GM12878 (cell line): ENCODE measurements at regions of chr2 and their contacts with region 1.

Region 1: GRCh38 chr2:207974216-207974605 is 51.1 kb downstream of the PLEKHM3 start:
- DNase-seq: no peak
- ATAC-seq: no peak
- H3K4me3 ChIP-seq: no peak overlapping the region
- H3K27ac ChIP-seq: no peak overlapping the region
- H3K4me1 ChIP-seq: 0 out of 2 replicates have a peak, but pooled peaks cover 3% of the 10 kb centered on the region
- H3K27me3 ChIP-seq: no peaks in the 10 kb centered on the region
- CTCF ChIP-seq: no peak
- EP300 ChIP-seq: no peak
- POLR2A ChIP-seq: no peak
- RAD21 ChIP-seq: no peak

Region 2: GRCh38 chr2:207754498-207755383 is 219.5 kb before region 1 on chr2:
- CTCF ChIA-PET with region 1: interaction called, 183 read pairs
- POLR2A ChIA-PET with region 1: no interaction called
- RAD21 ChIA-PET with region 1: interaction called, 115 read pairs
- SMC1A ChIA-PET with region 1: interaction called, 190 read pairs
- in situ Hi-C with region 1: loop called (anchors 10 kb)
- intact Hi-C with region 1: no loop called
- DNase-seq: no peak
- ATAC-seq: no peak
- H3K4me3 ChIP-seq: no peak overlapping the region
- H3K27ac ChIP-seq: no peak overlapping the region
- H3K4me1 ChIP-seq: no peaks in the 10 kb centered on the region
- H3K27me3 ChIP-seq: no peaks in the 10 kb centered on the region
- CTCF ChIP-seq: no peak
- EP300 ChIP-seq: no peak
- POLR2A ChIP-seq: no peak
- RAD21 ChIP-seq: no peak

Region 3: GRCh38 chr2:207960090-207960489 is 14.1 kb before region 1 on chr2:
- CTCF ChIA-PET with region 1: interaction called, 7 read pairs
- POLR2A ChIA-PET with region 1: interaction called, 4 read pairs
- RAD21 ChIA-PET with region 1: interaction called, 4 read pairs
- SMC1A ChIA-PET with region 1: interaction called, 11 read pairs
- in situ Hi-C with region 1: no loop called
- intact Hi-C with region 1: no loop called
- DNase-seq: no peak
- ATAC-seq: no peak
- H3K4me3 ChIP-seq: no peak overlapping the region
- H3K27ac ChIP-seq: no peak overlapping the region
- H3K4me1 ChIP-seq: no peaks in the 10 kb centered on the region
- H3K27me3 ChIP-seq: no peaks in the 10 kb centered on the region
- CTCF ChIP-seq: no peak
- EP300 ChIP-seq: no peak
- POLR2A ChIP-seq: no peak
- RAD21 ChIP-seq: no peak

Region 4: DNA sequence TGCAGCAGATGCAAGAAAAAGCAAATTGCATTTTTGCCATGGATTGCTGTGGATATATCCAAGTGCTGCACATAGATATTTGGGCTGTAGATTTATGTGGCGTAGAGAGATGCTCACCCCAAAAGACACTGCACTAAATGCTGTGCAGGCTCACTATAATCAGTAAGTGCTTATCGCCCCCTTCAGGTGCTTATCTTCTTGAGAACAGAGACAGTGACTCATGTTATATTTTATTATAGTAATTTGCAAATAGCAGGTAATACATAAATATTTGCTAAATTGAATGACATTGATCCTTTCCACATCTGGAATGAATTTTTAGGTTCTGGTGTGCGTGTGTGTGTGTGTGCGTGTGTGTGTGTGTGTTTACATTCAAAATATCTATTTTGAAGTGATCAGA is 87.9 kb after region 1 on chr2:
- CTCF ChIA-PET with region 1: interaction called, 7 read pairs
- POLR2A ChIA-PET with region 1: no interaction called
- RAD21 ChIA-PET with region 1: no interaction called
- SMC1A ChIA-PET with region 1: interaction called, 5 read pairs
- in situ Hi-C with region 1: no loop called
- intact Hi-C with region 1: loop called (anchors 5 kb)
- DNase-seq: no peak
- ATAC-seq: peak; percentile 54
- H3K4me3 ChIP-seq: no peak overlapping the region
- H3K27ac ChIP-seq: no peak overlapping the region
- H3K4me1 ChIP-seq: peaks cover 4% of the 10 kb centered on the region
- H3K27me3 ChIP-seq: no peaks in the 10 kb centered on the region
- CTCF ChIP-seq: peak; percentile 30 to 41 (median 35); a peak in 5 of 6 replicates
- EP300 ChIP-seq: no peak
- POLR2A ChIP-seq: no peak
- RAD21 ChIP-seq: peak; percentile 54